Activated naive CD4-positive, alpha-beta T cell treated with anti-CD3 and anti-CD28 coated beads for 36 hours (primary cell): ENCODE measurements at regions of chr2 and their contacts with region 1.

Region 1: GRCh38 chr2:227655454-227655853 is 11.2 kb upstream of the SCYGR5 start:
- DNase-seq: peak; percentile 14
- H3K4me3 Mint-ChIP-seq: no peak overlapping the region
- H3K27ac Mint-ChIP-seq: no peak overlapping the region
- H3K4me1 Mint-ChIP-seq: peaks cover 4% of the 10 kb centered on the region
- H3K27me3 Mint-ChIP-seq: peaks cover 3% of the 10 kb centered on the region

Region 2: DNA sequence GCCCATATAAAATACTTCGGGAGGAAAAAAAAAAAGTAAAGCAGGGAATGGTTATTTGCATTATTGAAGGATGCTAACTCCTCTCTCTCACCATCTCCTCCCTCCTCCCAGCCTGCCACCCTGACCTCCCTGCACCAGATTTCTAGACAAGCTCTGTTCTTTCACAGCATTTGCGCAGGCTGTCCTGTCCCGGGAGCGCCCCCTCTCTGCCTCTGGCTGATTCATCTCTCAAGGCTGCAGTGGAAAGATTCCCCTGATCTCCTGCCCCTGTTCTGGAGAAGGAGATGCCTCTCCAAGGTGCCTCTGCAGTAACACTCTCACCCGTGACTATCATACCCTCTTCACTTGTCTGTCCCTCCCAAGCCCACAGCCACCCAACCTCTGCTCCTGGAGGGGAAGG is 529.9 kb before region 1 on chr2:
- CTCF ChIA-PET with region 1: interaction called, 4 read pairs
- intact Hi-C with region 1: loop called (anchors 2 kb)
- DNase-seq: peak; percentile 20
- H3K4me3 Mint-ChIP-seq: no peak overlapping the region
- H3K27ac Mint-ChIP-seq: no peak overlapping the region
- H3K4me1 Mint-ChIP-seq: no peaks in the 10 kb centered on the region
- H3K27me3 Mint-ChIP-seq: peaks cover 13% of the 10 kb centered on the region

Region 3: DNA sequence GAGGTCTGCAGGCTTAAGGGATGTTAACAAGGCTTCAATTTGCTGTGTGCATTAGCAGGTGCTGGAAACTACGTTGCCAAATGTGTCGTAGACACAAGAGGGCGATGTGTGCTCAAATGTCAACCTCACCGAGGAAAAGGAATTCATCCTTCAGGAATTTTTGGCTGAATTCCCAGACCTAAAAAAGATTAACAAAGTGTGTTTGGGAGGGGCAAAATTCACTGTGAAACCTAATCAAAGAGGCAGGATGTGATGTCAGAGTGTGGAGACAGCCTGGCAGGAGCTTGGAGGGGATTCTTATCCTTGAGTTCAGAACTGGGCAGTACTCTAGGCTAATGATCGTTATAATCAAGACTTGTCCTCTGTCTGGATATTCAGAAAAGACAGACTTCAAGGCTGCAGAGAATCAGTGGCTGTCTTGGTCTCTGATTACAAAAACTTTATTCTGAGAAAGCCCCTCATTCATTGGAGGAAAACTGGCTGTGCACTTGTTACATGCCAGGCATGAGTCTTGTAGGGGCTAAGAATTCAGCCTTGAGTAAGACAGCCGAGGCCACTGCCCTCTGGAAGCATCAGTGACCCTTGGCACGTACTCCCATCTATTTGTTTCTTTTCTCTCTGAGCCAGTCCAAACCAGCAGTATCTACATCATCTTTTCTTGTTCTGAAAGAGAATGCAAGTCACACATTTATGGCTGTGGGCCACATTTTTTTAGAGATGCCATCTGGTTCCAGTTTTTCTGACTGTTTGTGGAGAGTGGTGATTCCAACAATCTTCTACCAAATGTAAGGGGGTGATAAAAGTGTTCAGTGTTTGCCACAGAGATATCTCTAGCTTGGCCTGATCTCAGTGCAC is 249.1 kb before region 1 on chr2:
- CTCF ChIA-PET with region 1: interaction called, 6 read pairs
- intact Hi-C with region 1: loop called (anchors 1 kb)
- DNase-seq: peak; percentile 53
- H3K4me3 Mint-ChIP-seq: no peak overlapping the region
- H3K27ac Mint-ChIP-seq: peak overlapping the region; percentile 43
- H3K4me1 Mint-ChIP-seq: peaks cover 71% of the 10 kb centered on the region
- H3K27me3 Mint-ChIP-seq: no peaks in the 10 kb centered on the region

Region 4: GRCh38 chr2:227479865-227480475 is 175.5 kb before region 1 on chr2:
- CTCF ChIA-PET with region 1: no interaction called
- intact Hi-C with region 1: loop called (anchors 1 kb)
- DNase-seq: no peak
- H3K4me3 Mint-ChIP-seq: peak overlapping the region; percentile 17
- H3K27ac Mint-ChIP-seq: peak overlapping the region; percentile 82
- H3K4me1 Mint-ChIP-seq: peaks cover 81% of the 10 kb centered on the region
- H3K27me3 Mint-ChIP-seq: no peaks in the 10 kb centered on the region

Region 5: DNA sequence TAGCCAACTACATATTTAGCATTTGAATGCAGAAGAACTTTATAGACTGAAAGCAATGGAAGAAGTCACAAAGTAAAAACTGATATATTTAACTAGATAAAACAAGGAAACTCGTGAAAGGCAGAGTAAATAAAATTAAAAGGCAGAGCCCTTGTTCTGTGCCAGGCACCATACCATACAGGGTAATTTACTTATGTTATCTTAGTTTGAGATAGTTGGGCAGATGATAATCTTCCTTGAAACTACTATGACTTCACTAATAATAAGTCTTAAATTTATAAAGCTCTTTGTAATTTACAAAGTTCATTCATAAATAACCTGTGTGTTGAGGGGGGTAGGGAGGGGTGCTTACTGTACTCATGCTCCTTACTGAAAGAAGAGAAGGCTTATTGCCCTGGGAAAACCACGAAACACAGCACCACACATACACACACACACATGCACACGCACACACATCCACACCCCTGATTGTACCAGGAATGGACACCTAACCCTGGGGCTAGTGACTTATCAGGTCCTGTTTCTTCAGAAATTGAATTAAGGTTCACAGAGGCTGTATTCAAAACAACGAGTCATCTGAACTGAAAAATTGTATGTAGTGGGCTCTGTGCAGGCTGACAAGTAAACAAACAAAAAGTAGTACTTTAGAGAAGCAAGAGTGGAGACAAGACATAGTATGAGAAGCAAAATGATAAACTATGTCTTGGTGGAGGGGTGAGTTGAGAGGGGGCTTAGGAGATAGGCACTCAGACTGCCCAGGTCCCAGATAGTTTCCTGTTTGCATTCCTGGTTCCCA is 145.4 kb before region 1 on chr2:
- CTCF ChIA-PET with region 1: no interaction called
- intact Hi-C with region 1: no loop called
- DNase-seq: no peak
- H3K4me3 Mint-ChIP-seq: no peak overlapping the region
- H3K27ac Mint-ChIP-seq: no peak overlapping the region
- H3K4me1 Mint-ChIP-seq: peaks cover 83% of the 10 kb centered on the region
- H3K27me3 Mint-ChIP-seq: no peaks in the 10 kb centered on the region

Region 6: DNA sequence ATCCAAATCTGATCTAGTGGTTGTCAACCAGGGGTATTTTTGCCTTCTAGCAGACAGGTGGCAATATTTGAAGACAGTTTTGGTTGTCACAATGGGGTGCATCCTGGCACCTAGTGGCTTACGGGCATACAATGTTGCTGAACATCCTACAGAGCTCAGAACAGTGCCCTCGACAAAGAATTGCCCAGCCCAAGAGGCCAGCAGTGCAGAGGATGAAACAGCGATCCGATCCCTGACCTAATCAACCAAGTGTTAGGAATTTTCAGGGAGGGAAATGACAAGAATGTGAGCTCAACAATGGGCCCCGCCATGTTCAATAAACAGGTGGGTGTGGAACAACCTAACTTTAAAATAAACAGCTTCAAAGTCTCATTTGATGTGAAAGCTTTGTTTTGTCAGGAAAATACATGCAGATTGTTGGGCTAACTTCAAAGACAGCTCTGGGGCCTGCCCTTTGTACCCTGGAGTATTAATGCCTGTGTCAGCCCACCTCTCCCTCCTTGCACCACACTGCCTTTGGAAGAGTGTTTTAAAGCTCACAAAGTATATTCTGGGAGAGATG is 11.4 kb before region 1 on chr2:
- CTCF ChIA-PET with region 1: interaction called, 10 read pairs
- intact Hi-C with region 1: no loop called
- DNase-seq: peak; percentile 9
- H3K4me3 Mint-ChIP-seq: no peak overlapping the region
- H3K27ac Mint-ChIP-seq: no peak overlapping the region
- H3K4me1 Mint-ChIP-seq: no peaks in the 10 kb centered on the region
- H3K27me3 Mint-ChIP-seq: peaks cover 8% of the 10 kb centered on the region

Region 7: DNA sequence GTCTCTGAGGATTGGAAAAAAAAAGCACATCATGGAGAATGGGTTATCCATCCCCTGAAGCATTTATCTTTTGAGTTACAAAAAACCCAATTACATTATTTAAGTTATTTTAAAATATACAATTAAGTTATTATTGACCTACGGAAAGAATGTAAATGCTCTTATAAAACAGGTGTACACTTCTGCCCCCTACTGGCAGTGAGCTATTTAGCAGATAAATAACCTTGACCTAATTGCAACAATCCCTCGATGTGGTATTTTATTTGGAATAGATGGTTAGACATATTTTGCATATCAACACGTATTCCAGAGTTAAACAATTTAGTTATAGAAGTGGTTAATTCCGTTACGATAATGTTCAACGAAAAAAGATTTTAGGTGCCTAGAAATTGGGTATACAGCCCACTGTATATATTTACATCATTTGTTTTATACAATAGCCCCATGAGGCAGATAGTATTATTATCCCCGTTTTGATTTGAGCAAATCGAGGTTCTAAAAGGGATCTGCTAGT is 206.8 kb after region 1 on chr2:
- CTCF ChIA-PET with region 1: interaction called, 12 read pairs
- intact Hi-C with region 1: loop called (anchors 1 kb)
- DNase-seq: peak; percentile 54
- H3K4me3 Mint-ChIP-seq: no peak overlapping the region
- H3K27ac Mint-ChIP-seq: no peak overlapping the region
- H3K4me1 Mint-ChIP-seq: peaks cover 2% of the 10 kb centered on the region
- H3K27me3 Mint-ChIP-seq: no peaks in the 10 kb centered on the region

Region 8: DNA sequence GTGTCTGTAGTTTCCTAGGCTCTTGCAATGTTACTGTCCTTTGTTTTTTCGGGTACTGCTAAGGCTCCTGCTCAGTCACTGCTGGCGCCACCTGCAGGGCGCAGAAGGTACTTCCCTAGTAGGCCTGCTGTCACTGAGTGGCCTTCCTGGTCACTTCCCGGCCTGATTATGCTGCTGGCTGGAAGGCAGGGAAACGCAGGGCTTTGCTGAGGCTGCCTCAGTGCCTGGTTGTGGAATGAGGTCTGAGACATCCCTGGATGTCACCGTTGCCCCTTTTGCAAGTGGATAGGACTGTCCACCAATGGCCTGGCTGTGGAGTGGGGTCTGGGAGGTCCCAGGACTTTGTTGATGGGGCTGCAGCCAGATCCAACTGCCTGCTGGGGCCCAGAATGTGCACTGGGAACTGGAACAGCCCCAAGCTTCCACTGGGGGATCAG is 229.1 kb after region 1 on chr2:
- CTCF ChIA-PET with region 1: no interaction called
- intact Hi-C with region 1: loop called (anchors 1 kb)
- DNase-seq: peak; percentile 69
- H3K4me3 Mint-ChIP-seq: no peak overlapping the region
- H3K27ac Mint-ChIP-seq: no peak overlapping the region
- H3K4me1 Mint-ChIP-seq: peaks cover 2% of the 10 kb centered on the region
- H3K27me3 Mint-ChIP-seq: no peaks in the 10 kb centered on the region

Region 9: GRCh38 chr2:227921648-227922047 is 266.2 kb after region 1 on chr2:
- CTCF ChIA-PET with region 1: no interaction called
- intact Hi-C with region 1: no loop called
- DNase-seq: no peak
- H3K4me3 Mint-ChIP-seq: no peak overlapping the region
- H3K27ac Mint-ChIP-seq: no peak overlapping the region
- H3K4me1 Mint-ChIP-seq: no peaks in the 10 kb centered on the region
- H3K27me3 Mint-ChIP-seq: peaks cover 4% of the 10 kb centered on the region